PC-3 (cell line): ENCODE measurements at regions of chr2 and their contacts with region 1.

Region 1: GRCh38 chr2:239401067-239401880 is 454 bp upstream of the HDAC4 start:
- DNase-seq: peak; percentile 97
- ATAC-seq: peak; percentile 96
- H3K4me3 ChIP-seq: peak overlapping the region; percentile 96
- H3K27ac ChIP-seq: peak overlapping the region; percentile 98
- H3K4me1 ChIP-seq: peaks cover 15% of the 10 kb centered on the region
- H3K27me3 ChIP-seq: no peaks in the 10 kb centered on the region
- CTCF ChIP-seq: no peak

Region 2: GRCh38 chr2:239245872-239246701 is 155.2 kb before region 1 on chr2:
- CTCF ChIA-PET with region 1: no interaction called
- POLR2A ChIA-PET with region 1: no interaction called
- intact Hi-C with region 1: loop called (anchors 1 kb)
- DNase-seq: no peak
- ATAC-seq: peak; percentile 36
- H3K4me3 ChIP-seq: peak overlapping the region; percentile 38; the same call in 1 of the 2 replicates
- H3K27ac ChIP-seq: peak overlapping the region; percentile 80
- H3K4me1 ChIP-seq: peaks cover 29% of the 10 kb centered on the region
- H3K27me3 ChIP-seq: no peaks in the 10 kb centered on the region
- CTCF ChIP-seq: no peak

Region 3: DNA sequence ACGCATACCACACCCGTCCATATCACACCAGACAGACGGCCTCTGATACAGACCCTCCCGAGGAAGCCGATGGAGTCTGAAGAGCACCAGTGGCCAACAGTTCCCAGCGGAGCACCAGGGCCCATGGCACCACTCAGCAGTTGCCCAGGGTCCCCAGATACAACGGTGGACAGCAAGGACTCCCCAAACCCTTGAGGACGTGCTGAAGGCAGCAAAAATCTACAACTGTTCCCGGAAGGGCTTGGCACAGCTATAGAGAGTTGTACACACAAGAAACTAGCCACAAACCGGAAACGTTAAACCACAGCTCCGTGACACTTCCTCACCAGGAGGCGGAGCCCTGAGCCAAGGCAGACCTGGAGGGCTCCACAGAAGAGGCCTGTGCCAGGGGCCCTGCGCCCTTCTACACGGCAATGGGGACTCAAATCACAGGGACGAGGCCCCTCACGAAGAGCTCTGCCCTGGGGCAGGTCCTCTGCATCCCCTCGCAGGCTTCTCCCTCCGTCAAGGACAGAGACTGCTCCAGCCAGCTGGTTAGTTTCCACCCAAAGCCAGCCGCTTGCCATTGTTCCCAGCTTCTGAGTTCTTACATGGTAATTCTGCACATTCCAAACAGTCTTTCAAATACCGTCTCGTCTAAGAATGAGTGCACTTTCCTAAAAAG is 133.9 kb before region 1 on chr2:
- CTCF ChIA-PET with region 1: no interaction called
- POLR2A ChIA-PET with region 1: no interaction called
- intact Hi-C with region 1: loop called (anchors 5 kb)
- DNase-seq: peak; percentile 80
- ATAC-seq: peak; percentile 89
- H3K4me3 ChIP-seq: no peak overlapping the region
- H3K27ac ChIP-seq: peak overlapping the region; percentile 21
- H3K4me1 ChIP-seq: peaks cover 34% of the 10 kb centered on the region
- H3K27me3 ChIP-seq: no peaks in the 10 kb centered on the region
- CTCF ChIP-seq: peak; percentile 47

Region 4: DNA sequence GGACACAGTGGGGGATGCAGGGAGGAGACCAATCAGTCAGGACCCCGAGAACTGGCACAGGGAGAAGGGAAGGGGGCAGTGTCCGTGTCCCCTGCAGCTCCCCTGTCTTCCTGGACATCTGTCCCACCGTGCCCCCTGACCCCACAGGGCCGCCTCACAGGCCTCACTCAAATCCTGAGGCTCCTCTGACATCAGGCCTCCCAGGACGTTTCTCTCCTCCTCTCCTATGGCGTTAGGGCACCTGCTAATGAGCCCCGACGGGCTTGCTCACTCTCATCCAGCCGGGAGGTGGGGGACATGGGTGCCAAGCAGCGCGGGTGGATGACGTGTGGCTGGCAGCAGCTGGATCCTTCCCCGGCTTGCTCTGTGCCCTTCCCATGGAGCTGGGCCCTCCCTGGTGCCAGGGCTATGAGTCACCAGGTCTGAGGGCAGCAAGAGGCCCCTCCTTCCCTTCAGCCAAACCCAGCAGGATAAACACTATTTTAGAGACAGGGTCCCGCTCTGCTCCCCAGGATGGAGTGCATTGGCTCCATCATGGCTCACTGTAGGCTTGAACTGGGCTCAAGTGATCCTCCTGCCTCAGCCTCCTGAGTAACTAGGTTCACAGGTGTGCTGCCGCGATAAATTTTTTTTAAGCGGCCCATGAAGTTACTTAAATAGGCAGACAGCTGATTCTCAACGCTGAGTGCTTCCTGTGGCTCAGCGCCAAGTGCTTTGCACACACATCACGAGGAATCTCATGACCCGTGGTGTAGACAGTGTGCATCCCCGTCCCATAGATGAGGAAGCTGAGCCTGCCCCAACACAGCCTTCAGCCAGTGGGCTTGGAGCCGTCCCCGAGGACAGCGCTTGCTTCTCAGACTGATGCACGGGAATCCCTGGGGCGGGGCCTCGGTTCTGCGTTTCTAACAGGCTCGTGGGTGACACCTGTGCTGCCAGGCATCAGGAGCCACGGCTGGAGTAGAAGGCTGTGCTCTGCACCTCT is 64.0 kb after region 1 on chr2:
- CTCF ChIA-PET with region 1: no interaction called
- POLR2A ChIA-PET with region 1: interaction called, 4 read pairs
- intact Hi-C with region 1: loop called (anchors 2 kb)
- DNase-seq: peak; percentile 82
- ATAC-seq: peak; percentile 98
- H3K4me3 ChIP-seq: 0 out of 2 replicates have a peak overlapping the region, but pooled peaks have one; percentile 19
- H3K27ac ChIP-seq: no peak overlapping the region
- H3K4me1 ChIP-seq: peaks cover 13% of the 10 kb centered on the region; the same call in 1 of the 2 replicates
- H3K27me3 ChIP-seq: no peaks in the 10 kb centered on the region
- CTCF ChIP-seq: no peak